PC-3 (cell line): ENCODE measurements at regions of chr3 and their contacts with region 1.

Region 1: GRCh38 chr3:125055913-125056745 is at the start of gene HEG1:
- DNase-seq: peak; percentile 59
- ATAC-seq: peak; percentile 35
- H3K4me3 ChIP-seq: peak within 1 kb of the TSS; percentile 83
- H3K27ac ChIP-seq: no peak within 1 kb of the TSS
- H3K4me1 ChIP-seq: peaks cover 62% of the 10 kb centered on the region
- H3K27me3 ChIP-seq: no peaks in the 10 kb centered on the region
- CTCF ChIP-seq: no peak
- total RNA-seq, gene HEG1: 1.2 and 3.2 TPM in 2 replicates

Region 2: GRCh38 chr3:124995460-124995994 is 60.6 kb before region 1 on chr3:
- CTCF ChIA-PET with region 1: interaction called, 5 read pairs
- POLR2A ChIA-PET with region 1: no interaction called
- intact Hi-C with region 1: loop called (anchors 2 kb)
- DNase-seq: peak; percentile 75
- ATAC-seq: peak; percentile 98
- H3K4me3 ChIP-seq: no peak overlapping the region
- H3K27ac ChIP-seq: no peak overlapping the region
- H3K4me1 ChIP-seq: peaks cover 8% of the 10 kb centered on the region; the same call in 1 of the 2 replicates
- H3K27me3 ChIP-seq: no peaks in the 10 kb centered on the region
- CTCF ChIP-seq: peak; percentile 83

Region 3: DNA sequence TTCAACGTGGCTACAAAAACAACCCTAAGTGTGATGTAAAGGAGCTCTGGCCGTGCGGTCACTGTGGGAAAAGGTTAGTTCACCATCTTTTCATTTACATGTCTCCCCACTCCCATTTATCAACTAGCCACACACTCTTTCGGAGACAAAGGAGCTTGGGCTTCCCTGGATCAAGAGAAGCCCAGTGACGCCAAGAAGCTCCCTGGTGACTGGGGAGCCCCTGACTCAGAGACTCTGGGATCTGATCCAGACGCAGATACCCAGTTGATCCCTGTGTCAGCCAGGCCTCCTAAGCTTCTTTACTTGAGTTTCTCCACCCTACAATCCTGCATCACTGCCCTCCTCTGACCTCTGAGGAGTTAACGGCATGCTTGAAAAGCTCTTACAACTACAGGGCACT is 44.2 kb before region 1 on chr3:
- CTCF ChIA-PET with region 1: interaction called, 3 read pairs
- POLR2A ChIA-PET with region 1: no interaction called
- intact Hi-C with region 1: loop called (anchors 5 kb)
- DNase-seq: no peak
- ATAC-seq: no peak
- H3K4me3 ChIP-seq: no peak overlapping the region
- H3K27ac ChIP-seq: no peak overlapping the region
- H3K4me1 ChIP-seq: peaks cover 13% of the 10 kb centered on the region
- H3K27me3 ChIP-seq: no peaks in the 10 kb centered on the region
- CTCF ChIP-seq: no peak

Region 4: DNA sequence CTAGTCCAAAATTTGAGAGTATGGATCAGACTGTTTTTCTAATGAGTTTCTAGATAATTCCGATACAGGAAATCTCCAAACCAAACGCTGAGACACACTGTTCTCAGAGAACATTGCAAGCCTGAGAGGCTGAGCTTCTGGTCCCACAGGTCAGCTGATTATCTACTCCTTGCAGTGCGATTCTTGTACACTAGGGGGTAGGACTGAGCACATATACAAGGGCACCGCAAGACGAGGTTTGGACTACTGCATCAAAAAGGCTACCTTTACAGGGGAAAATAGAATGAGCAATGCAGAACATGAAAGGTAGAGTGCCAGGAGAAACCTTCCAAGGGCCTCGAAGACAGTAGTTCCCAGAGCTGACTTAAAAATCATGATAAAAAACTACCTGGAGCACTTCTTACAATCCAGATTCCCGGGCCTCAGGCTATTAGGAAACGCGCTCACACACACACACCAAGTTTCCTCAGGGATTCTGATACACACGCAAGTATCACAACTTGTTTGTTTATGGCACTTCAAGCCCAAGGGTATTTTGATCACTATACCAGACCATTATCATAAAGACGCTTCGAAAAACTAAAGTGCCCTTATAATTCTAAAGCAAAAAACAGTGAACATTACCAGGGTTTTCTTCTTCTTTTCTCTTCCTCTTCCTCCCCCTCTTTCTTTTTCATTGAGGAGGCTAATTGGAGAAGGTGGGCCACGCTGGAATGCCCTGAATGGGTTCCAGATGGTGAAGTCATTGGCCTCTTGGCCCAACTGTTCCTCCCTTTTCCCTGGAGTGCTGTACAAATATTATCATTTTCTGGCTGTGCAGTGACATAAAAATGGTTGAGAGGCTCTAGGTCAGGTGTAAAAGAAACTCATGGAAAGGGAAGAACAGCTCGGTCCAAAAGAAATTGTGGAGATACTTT is 94.7 kb after region 1 on chr3:
- CTCF ChIA-PET with region 1: no interaction called
- POLR2A ChIA-PET with region 1: no interaction called
- intact Hi-C with region 1: loop called (anchors 5 kb)
- DNase-seq: peak; percentile 71
- ATAC-seq: peak; percentile 57
- H3K4me3 ChIP-seq: no peak overlapping the region
- H3K27ac ChIP-seq: no peak overlapping the region
- H3K4me1 ChIP-seq: no peaks in the 10 kb centered on the region
- H3K27me3 ChIP-seq: no peaks in the 10 kb centered on the region
- CTCF ChIP-seq: peak; percentile 70

Region 5: DNA sequence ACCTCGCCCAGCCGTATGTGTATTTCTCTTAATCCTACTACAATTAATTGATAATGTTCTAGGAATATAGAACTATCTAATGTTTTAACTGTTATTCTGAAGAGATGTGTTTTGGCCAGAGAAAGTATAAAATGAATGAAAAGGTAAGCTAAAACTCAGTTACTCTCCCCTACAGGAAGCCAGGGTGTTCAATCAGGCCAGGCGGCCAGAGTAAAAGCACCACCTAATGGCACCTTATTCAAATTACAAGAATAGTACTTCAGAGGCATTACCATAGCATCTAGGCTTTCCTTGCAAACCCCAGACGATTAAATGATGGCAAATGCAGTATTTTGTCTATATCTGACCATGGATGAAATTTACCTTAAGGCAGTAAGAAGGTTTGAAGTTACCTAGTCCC is 146.1 kb after region 1 on chr3:
- CTCF ChIA-PET with region 1: no interaction called
- POLR2A ChIA-PET with region 1: no interaction called
- intact Hi-C with region 1: loop called (anchors 2 kb)
- DNase-seq: peak; percentile 47
- ATAC-seq: peak; percentile 72
- H3K4me3 ChIP-seq: no peak overlapping the region
- H3K27ac ChIP-seq: no peak overlapping the region
- H3K4me1 ChIP-seq: no peaks in the 10 kb centered on the region
- H3K27me3 ChIP-seq: no peaks in the 10 kb centered on the region
- CTCF ChIP-seq: peak; percentile 58

Region 6: DNA sequence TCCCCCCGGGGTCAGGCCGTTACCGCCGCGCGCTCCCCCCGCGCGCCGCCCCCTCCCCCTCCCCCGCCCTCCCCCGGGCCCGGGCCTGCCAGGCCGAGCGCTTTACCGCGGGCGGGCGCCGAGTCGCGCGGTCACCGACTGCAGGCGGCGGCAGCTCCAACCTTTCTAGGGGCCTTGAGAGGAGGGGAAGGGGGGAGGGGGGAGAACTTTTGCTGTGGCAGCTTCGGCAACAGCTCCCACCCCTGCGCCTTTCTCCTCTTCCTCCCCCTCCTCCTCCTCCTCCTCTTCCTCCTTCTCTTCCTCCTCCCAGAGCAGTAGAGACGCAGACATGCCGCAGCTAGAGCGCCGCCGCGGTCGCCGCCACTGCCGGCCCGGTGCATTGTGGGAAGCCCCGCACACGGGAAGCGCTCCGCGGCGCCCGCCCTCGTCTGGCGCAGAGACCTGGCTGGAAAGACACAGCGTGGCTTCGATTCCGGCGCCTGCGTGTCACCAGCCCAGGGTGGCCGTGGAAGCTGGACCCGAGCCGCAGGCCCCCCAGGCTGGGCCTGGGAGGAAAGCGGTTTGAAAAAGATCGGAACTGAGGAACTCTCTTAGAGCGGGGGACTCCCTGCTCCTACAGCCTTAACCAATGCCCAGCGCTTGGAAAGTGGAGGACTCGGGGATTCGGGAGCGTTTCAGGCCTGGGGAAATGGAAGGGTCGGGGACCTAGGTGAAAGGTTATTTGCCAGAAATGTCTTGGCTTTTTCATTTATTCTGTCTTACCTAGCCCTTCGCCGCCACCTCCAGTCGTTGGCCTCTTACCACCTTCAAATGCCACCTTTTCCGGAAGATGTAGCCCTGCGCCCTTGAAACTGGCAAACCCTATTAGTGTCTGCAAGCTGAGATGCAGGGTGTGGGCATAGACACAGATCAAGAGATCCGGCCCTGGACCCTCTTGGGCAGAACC is 319.1 kb after region 1 on chr3 and contains the start of gene ZNF148:
- CTCF ChIA-PET with region 1: no interaction called
- POLR2A ChIA-PET with region 1: no interaction called
- intact Hi-C with region 1: loop called (anchors 10 kb)
- DNase-seq: peak; percentile 85
- ATAC-seq: peak; percentile 75
- H3K4me3 ChIP-seq: peak within 1 kb of the TSS; percentile 89
- H3K27ac ChIP-seq: peak within 1 kb of the TSS; percentile 86
- H3K4me1 ChIP-seq: peaks cover 17% of the 10 kb centered on the region
- H3K27me3 ChIP-seq: no peaks in the 10 kb centered on the region
- CTCF ChIP-seq: no peak
- total RNA-seq, gene ZNF148: 18.1 and 23.3 TPM in 2 replicates

Region 7: GRCh38 chr3:125437631-125438435 is 381.7 kb after region 1 on chr3:
- CTCF ChIA-PET with region 1: no interaction called
- POLR2A ChIA-PET with region 1: no interaction called
- intact Hi-C with region 1: loop called (anchors 10 kb)
- DNase-seq: peak; percentile 61
- ATAC-seq: peak; percentile 27; the same call in 1 of the 2 replicates
- H3K4me3 ChIP-seq: no peak overlapping the region
- H3K27ac ChIP-seq: no peak overlapping the region
- H3K4me1 ChIP-seq: peaks cover 14% of the 10 kb centered on the region
- H3K27me3 ChIP-seq: no peaks in the 10 kb centered on the region
- CTCF ChIP-seq: peak; percentile 89